Right cardiac atrium (tissue), 5 donors: ENCODE measurements at regions of chr15 and their contacts with region 1.

Region 1: DNA sequence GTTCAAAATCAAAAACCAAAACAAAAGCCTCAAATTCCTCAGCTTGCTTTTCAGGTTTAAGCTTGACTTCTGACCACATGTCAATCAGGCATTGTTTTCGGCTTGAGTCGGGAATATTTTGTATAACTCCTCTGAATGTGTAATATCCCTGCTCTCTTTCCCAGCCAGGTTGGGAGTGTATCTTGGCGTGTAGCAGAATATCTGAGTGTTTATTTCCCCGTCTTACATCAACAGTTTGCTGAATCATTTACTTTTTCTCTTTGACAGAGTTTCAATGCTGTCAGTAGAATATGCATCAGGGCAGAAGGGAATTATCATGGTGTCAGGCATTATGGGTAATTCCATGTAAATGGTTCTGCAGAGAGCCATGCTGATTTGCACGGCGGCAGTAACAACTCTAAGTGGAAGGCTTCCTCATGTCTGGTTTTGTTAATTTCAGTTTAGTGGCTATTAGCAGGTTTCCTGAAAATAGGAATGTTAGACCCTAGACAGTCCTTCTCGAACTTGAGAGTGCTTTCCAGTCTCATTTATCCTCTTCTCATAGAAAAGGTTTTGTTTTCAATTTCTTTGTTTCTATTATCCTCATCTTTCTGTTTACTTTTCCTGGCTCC is 566.3 kb downstream of the AGBL1 start:
- DNase-seq: no peak
- ATAC-seq: no peak
- H3K4me3 ChIP-seq: no peak overlapping the region
- H3K27ac ChIP-seq: no peak overlapping the region
- H3K4me1 ChIP-seq: no peaks in the 10 kb centered on the region
- H3K27me3 ChIP-seq: no peaks in the 10 kb centered on the region

Region 2: GRCh38 chr15:86267892-86268291 is 378.1 kb before region 1 on chr15:
- intact Hi-C with region 1: no loop called
- DNase-seq: no peak
- ATAC-seq: no peak
- H3K4me3 ChIP-seq: no peak overlapping the region
- H3K27ac ChIP-seq: no peak overlapping the region
- H3K4me1 ChIP-seq: no peaks in the 10 kb centered on the region
- H3K27me3 ChIP-seq: no peaks in the 10 kb centered on the region

Region 3: GRCh38 chr15:86489981-86490380 is 156.0 kb before region 1 on chr15:
- intact Hi-C with region 1: no loop called
- DNase-seq: no peak
- ATAC-seq: peak in 1 of 2 donors; percentile 43
- H3K4me3 ChIP-seq: no peak overlapping the region
- H3K27ac ChIP-seq: no peak overlapping the region
- H3K4me1 ChIP-seq: peaks cover 2% of the 10 kb centered on the region
- H3K27me3 ChIP-seq: no peaks in the 10 kb centered on the region

Region 4: GRCh38 chr15:86929461-86929860 is 283.5 kb after region 1 on chr15:
- intact Hi-C with region 1: loop called in 1 of 4 experiments (anchors 10 kb)
- DNase-seq: no peak
- ATAC-seq: no peak
- H3K4me3 ChIP-seq: no peak overlapping the region
- H3K27ac ChIP-seq: no peak overlapping the region
- H3K4me1 ChIP-seq: no peaks in the 10 kb centered on the region
- H3K27me3 ChIP-seq: no peaks in the 10 kb centered on the region